Activated CD8-positive, alpha-beta T cell treated with anti-CD3 and anti-CD28 coated beads, Interleukin-2, amount 10 ng/mL, durations not matched to agents 7 days and 5 days (primary cell): ENCODE measurements at regions of chr2 and their contacts with region 1.

Region 1: GRCh38 chr2:197310271-197310985 is at the start of gene ANKRD44:
- DNase-seq: peak; percentile 91
- ATAC-seq: peak; percentile 73
- H3K4me3 Mint-ChIP-seq: peak within 1 kb of the TSS; percentile 95
- H3K27ac Mint-ChIP-seq: peak within 1 kb of the TSS; percentile 95
- H3K4me1 Mint-ChIP-seq: peaks cover 57% of the 10 kb centered on the region
- H3K27me3 Mint-ChIP-seq: no peaks in the 10 kb centered on the region
- total RNA-seq, gene ANKRD44: 188 to 224 TPM

Region 2: DNA sequence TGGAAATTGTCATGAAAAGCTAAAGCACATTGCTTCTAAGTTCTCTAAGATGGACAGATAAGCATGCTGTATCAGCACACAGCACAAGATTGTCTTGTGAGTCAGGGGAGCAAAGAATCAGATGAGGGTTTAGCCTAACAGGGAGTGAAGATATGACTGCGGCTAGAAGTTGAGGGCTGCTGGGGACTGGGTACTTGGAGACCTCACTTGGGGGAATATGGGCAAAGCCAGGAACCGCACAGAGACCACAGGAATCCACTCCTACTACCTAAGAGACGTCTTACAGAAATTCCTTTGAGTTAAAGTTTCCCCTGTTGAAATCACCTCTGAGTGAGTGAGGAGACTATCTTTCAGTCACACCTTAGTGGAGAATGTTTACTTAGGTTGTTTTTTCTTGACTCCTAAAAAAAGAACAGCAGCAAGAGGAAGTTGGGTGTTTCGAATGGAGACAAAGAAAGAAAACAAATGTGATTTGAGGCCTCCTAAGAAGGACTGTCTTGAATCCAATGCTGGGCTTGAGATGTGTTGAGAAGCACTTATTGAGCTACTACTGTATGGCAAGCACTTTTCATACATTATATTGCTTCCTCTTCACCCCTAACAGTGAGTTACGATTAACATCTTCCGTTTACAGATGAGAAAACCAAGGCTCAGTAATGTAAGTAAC is 100.6 kb before region 1 on chr2:
- CTCF ChIA-PET with region 1: interaction called, 18 read pairs
- POLR2A ChIA-PET with region 1: interaction called, 66 read pairs
- DNase-seq: peak; percentile 56
- ATAC-seq: peak; percentile 56
- H3K4me3 Mint-ChIP-seq: peak overlapping the region; percentile 48
- H3K27ac Mint-ChIP-seq: peak overlapping the region; percentile 87
- H3K4me1 Mint-ChIP-seq: peaks cover 98% of the 10 kb centered on the region
- H3K27me3 Mint-ChIP-seq: no peaks in the 10 kb centered on the region

Region 3: DNA sequence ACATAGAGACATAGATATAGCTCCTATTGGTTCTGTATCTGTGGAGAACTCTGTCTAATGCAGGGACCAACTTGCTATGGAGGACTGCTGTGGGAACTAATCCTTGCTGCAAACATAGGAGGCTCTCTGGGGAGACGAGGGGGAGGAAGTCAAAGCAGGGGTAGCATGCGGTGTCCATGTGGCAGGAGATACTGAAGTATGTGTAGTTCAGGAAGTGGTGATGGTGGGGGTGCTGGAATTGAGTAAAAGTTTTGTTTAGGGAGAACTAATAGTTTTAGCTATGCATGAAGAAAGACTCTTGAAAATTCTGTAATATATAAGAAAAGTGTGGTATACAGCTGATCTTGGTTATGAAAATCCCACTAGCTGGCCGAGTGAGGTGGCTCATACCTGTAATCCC is 61.8 kb before region 1 on chr2:
- CTCF ChIA-PET with region 1: interaction called, 6 read pairs
- POLR2A ChIA-PET with region 1: interaction called, 14 read pairs
- DNase-seq: peak; percentile 58
- ATAC-seq: peak; percentile 80
- H3K4me3 Mint-ChIP-seq: peak overlapping the region; percentile 3
- H3K27ac Mint-ChIP-seq: peak overlapping the region; percentile 72
- H3K4me1 Mint-ChIP-seq: peaks cover 72% of the 10 kb centered on the region
- H3K27me3 Mint-ChIP-seq: no peaks in the 10 kb centered on the region

Region 4: GRCh38 chr2:197286805-197287598 is 23.4 kb before region 1 on chr2:
- CTCF ChIA-PET with region 1: interaction called, 78 read pairs
- POLR2A ChIA-PET with region 1: interaction called, 226 read pairs
- DNase-seq: peak; percentile 70
- ATAC-seq: peak; percentile 89
- H3K4me3 Mint-ChIP-seq: peak overlapping the region; percentile 63
- H3K27ac Mint-ChIP-seq: peak overlapping the region; percentile 95
- H3K4me1 Mint-ChIP-seq: peaks cover 76% of the 10 kb centered on the region
- H3K27me3 Mint-ChIP-seq: no peaks in the 10 kb centered on the region

Region 5: GRCh38 chr2:197322724-197323720 is 12.6 kb after region 1 on chr2:
- CTCF ChIA-PET with region 1: interaction called, 25 read pairs
- POLR2A ChIA-PET with region 1: interaction called, 33 read pairs
- DNase-seq: peak; percentile 46
- ATAC-seq: peak; percentile 77
- H3K4me3 Mint-ChIP-seq: peak overlapping the region; percentile 58
- H3K27ac Mint-ChIP-seq: peak overlapping the region; percentile 91
- H3K4me1 Mint-ChIP-seq: peaks cover 52% of the 10 kb centered on the region
- H3K27me3 Mint-ChIP-seq: no peaks in the 10 kb centered on the region

Region 6: DNA sequence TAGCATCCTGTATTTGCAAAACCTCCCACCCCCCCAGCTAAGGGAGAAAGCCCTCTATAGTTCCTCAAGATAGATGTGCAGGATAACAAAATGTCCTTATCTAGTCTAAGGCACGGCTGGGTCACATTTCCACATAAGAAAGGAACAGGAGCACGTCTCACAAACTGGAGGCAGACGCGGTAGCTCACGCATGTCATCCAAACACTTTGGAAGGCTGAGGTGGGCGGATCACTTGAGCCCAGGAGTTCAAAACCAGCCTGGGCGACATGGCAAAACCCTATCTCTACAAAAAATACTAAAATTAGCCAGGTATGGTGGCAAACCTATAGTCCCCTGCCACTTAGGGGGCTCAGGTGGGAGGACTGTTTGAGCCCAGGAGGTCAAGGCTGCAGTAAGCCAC is 115.1 kb after region 1 on chr2:
- CTCF ChIA-PET with region 1: no interaction called
- POLR2A ChIA-PET with region 1: no interaction called
- DNase-seq: no peak
- ATAC-seq: no peak
- H3K4me3 Mint-ChIP-seq: no peak overlapping the region
- H3K27ac Mint-ChIP-seq: peak overlapping the region; percentile 34
- H3K4me1 Mint-ChIP-seq: peaks cover 59% of the 10 kb centered on the region
- H3K27me3 Mint-ChIP-seq: no peaks in the 10 kb centered on the region

Region 7: DNA sequence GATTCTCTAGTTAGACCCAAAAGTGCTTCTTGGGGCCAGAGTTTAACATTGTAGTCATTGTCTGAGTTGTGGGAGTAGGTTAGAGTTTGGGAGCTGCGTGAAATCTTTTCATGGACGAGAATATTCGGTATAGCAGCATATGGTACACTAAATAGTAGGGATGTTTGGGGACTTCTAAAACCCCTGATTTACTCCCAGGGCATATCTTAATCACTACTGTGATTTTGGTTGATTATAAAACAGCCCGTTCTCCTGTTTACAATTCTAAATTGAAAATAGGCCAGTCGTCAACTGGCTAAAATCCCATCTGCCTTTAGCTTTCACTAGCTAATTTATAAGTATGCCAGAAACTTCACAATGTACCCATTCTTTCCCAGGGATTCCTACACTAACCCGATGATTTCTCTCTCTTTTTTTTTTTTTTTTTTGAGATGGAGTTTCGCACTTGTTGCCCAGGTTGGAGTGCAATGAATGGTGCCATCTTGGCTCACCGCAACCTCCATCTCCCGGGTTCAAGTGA is 249.8 kb after region 1 on chr2:
- CTCF ChIA-PET with region 1: no interaction called
- POLR2A ChIA-PET with region 1: no interaction called
- DNase-seq: no peak
- ATAC-seq: no peak
- H3K4me3 Mint-ChIP-seq: no peak overlapping the region
- H3K27ac Mint-ChIP-seq: no peak overlapping the region
- H3K4me1 Mint-ChIP-seq: no peaks in the 10 kb centered on the region
- H3K27me3 Mint-ChIP-seq: no peaks in the 10 kb centered on the region